ENCODE measurements at regions of chr14 and their contacts with region 1.

Region 1: GRCh38 chr14:102096214-102097114 is 9.6 kb upstream of the HSP90AA1 start:
- DNase-seq: peak; percentile 73

Region 2: GRCh38 chr14:102046343-102047278 is 49.9 kb before region 1 on chr14:
- CTCF ChIA-PET with region 1: interaction called, 14 read pairs
- POLR2A ChIA-PET with region 1: interaction called, 4 read pairs
- DNase-seq: peak; percentile 61

Measured in HEK293T (cell line).